CD4-positive, alpha-beta memory T cell (primary cell): ENCODE measurements at regions of chr17 and their contacts with region 1.

Region 1: GRCh38 chr17:5049314-5049895 is 14.2 kb upstream of the SLC52A1 start:
- DNase-seq: peak; percentile 79 to 89 (median 85)
- H3K4me3 ChIP-seq: no peak overlapping the region
- H3K4me3 Mint-ChIP-seq: peak overlapping the region in 7 of 8 donors; percentile 61 to 89 (median 74)
- H3K27ac ChIP-seq: peak overlapping the region; percentile 42
- H3K27ac Mint-ChIP-seq: peak overlapping the region; percentile 93 to 98 (median 95)
- H3K4me1 ChIP-seq: peaks cover 60% of the 10 kb centered on the region
- H3K4me1 Mint-ChIP-seq: peaks cover 32 to 60% (median 47%) of the 10 kb centered on the region in 4 donors
- H3K27me3 ChIP-seq: no peaks in the 10 kb centered on the region
- H3K27me3 Mint-ChIP-seq: no peaks in the 10 kb centered on the region

Region 2: GRCh38 chr17:4948931-4949320 is 100.5 kb before region 1 on chr17:
- CTCF ChIA-PET with region 1: no interaction called
- POLR2A ChIA-PET with region 1: interaction called, 12 read pairs
- intact Hi-C with region 1: no loop called
- DNase-seq: peak in 4 of 5 donors; percentile 78 to 82 (median 80)
- H3K4me3 ChIP-seq: peak overlapping the region; percentile 61 to 94
- H3K4me3 Mint-ChIP-seq: peak overlapping the region; percentile 95 to 100 (median 99)
- H3K27ac ChIP-seq: peak overlapping the region; percentile 94
- H3K27ac Mint-ChIP-seq: peak overlapping the region; percentile 92 to 100 (median 98)
- H3K4me1 ChIP-seq: peaks cover 43% of the 10 kb centered on the region
- H3K4me1 Mint-ChIP-seq: peaks cover 24 to 63% (median 39%) of the 10 kb centered on the region in 4 donors
- H3K27me3 ChIP-seq: no peaks in the 10 kb centered on the region
- H3K27me3 Mint-ChIP-seq: no peaks in the 10 kb centered on the region

Region 3: DNA sequence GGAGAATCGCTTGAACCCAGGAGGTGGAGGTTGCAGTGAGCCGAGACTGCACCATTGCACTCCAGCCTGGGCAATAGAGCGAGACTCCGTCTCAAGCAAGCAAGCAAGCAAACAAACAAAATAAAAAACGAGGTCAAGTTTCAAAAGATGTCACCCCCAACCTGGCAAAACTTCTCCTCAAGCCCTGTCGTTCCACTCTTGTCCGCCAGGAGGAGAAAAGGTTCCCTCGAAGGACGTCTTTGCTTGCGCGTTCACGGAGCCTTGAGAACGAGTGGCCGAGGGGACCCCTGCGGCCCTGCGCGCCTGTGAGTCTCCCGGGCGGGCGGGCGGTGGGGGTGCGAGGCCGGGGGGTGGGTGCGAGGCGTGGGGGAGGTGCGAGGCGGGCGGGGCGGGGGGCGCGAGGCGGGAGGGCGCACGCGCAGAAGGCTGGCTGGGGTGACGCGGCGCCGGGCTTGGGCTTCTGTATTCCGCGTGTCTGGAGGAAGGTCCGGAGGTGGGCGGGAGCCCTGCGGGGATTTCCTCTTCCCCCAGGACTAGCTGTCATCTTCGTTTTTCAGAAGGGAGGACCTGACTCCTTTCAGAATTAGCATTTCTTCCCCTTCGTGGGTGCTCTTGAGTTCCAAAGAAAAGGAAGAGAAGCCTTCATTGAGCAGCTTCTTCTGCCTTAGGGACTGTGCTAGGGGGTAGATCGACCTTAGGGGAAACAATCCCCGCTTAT is 17.9 kb before region 1 on chr17:
- CTCF ChIA-PET with region 1: interaction called, 127 read pairs
- POLR2A ChIA-PET with region 1: interaction called, 146 read pairs
- intact Hi-C with region 1: loop called (anchors 1 kb)
- DNase-seq: peak; percentile 77 to 83 (median 81)
- H3K4me3 ChIP-seq: peak overlapping the region in 1 of 2 donors; percentile 23
- H3K4me3 Mint-ChIP-seq: peak overlapping the region; percentile 79 to 89 (median 87)
- H3K27ac ChIP-seq: peak overlapping the region; percentile 67
- H3K27ac Mint-ChIP-seq: peak overlapping the region; percentile 90 to 94 (median 93)
- H3K4me1 ChIP-seq: peaks cover 25% of the 10 kb centered on the region
- H3K4me1 Mint-ChIP-seq: peaks cover 11 to 38% (median 17%) of the 10 kb centered on the region in 4 donors
- H3K27me3 ChIP-seq: no peaks in the 10 kb centered on the region
- H3K27me3 Mint-ChIP-seq: no peaks in the 10 kb centered on the region

Region 4: GRCh38 chr17:5092139-5093010 is 43.0 kb after region 1 on chr17:
- CTCF ChIA-PET with region 1: no interaction called
- POLR2A ChIA-PET with region 1: no interaction called
- intact Hi-C with region 1: no loop called
- DNase-seq: no peak
- H3K4me3 ChIP-seq: no peak overlapping the region
- H3K4me3 Mint-ChIP-seq: no peak overlapping the region
- H3K27ac ChIP-seq: no peak overlapping the region
- H3K27ac Mint-ChIP-seq: no peak overlapping the region
- H3K4me1 ChIP-seq: peaks cover 5% of the 10 kb centered on the region
- H3K4me1 Mint-ChIP-seq: peaks cover 0 to 13% (median under 1%) of the 10 kb centered on the region in 4 donors
- H3K27me3 ChIP-seq: peaks cover 7% of the 10 kb centered on the region
- H3K27me3 Mint-ChIP-seq: peaks cover 0 to 1% of the 10 kb centered on the region in 2 donors